Activated CD4-positive, alpha-beta T cell treated with anti-CD3 and anti-CD28 coated beads, Interleukin-2, amount 10 ng/mL, durations not matched to agents 24 days and 14 days (primary cell): ENCODE measurements at regions of chr13 and their contacts with region 1.

Region 1: GRCh38 chr13:46796515-46797474 is at the start of gene ESD:
- DNase-seq: peak; percentile 97
- H3K4me3 Mint-ChIP-seq: peak within 1 kb of the TSS; percentile 96
- H3K27ac Mint-ChIP-seq: peak within 1 kb of the TSS; percentile 98
- H3K4me1 Mint-ChIP-seq: peaks cover 27% of the 10 kb centered on the region
- H3K27me3 Mint-ChIP-seq: peaks cover 4% of the 10 kb centered on the region
- total RNA-seq, gene ESD: 127 and 128 TPM in 2 replicates

Region 2: DNA sequence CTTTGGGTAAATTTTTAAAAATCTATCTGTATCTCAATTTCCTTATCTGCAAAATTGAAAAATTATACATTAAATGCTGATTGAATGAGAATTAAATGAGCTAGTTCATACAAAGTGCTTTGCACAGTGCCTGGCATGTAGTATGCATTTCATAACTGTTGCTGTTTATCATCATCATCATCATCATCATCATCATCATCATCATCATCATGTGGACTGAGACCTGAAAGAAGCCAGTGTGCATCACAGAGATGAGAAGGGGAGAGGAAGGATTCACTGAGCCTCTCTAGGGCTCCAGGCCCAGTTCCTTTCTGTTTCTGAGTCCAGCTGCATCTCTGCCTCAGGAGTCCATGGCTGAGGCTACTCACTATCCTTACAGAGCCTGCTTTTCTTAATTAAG is 737.4 kb before region 1 on chr13:
- intact Hi-C with region 1: no loop called
- DNase-seq: no peak
- H3K4me3 Mint-ChIP-seq: no peak overlapping the region
- H3K27ac Mint-ChIP-seq: no peak overlapping the region
- H3K4me1 Mint-ChIP-seq: no peaks in the 10 kb centered on the region
- H3K27me3 Mint-ChIP-seq: peaks cover 18% of the 10 kb centered on the region

Region 3: GRCh38 chr13:46751811-46752635 is 44.8 kb before region 1 on chr13:
- intact Hi-C with region 1: loop called (anchors 5 kb)
- DNase-seq: peak; percentile 89
- H3K4me3 Mint-ChIP-seq: peak overlapping the region; percentile 62
- H3K27ac Mint-ChIP-seq: peak overlapping the region; percentile 57
- H3K4me1 Mint-ChIP-seq: peaks cover 33% of the 10 kb centered on the region
- H3K27me3 Mint-ChIP-seq: no peaks in the 10 kb centered on the region

Region 4: GRCh38 chr13:46975173-46975572 is 178.4 kb after region 1 on chr13:
- intact Hi-C with region 1: no loop called
- DNase-seq: no peak
- H3K4me3 Mint-ChIP-seq: no peak overlapping the region
- H3K27ac Mint-ChIP-seq: no peak overlapping the region
- H3K4me1 Mint-ChIP-seq: no peaks in the 10 kb centered on the region
- H3K27me3 Mint-ChIP-seq: no peaks in the 10 kb centered on the region